Prostate gland (tissue), 2 donors: ENCODE measurements at regions of chr4 and their contacts with region 1.

Region 1: DNA sequence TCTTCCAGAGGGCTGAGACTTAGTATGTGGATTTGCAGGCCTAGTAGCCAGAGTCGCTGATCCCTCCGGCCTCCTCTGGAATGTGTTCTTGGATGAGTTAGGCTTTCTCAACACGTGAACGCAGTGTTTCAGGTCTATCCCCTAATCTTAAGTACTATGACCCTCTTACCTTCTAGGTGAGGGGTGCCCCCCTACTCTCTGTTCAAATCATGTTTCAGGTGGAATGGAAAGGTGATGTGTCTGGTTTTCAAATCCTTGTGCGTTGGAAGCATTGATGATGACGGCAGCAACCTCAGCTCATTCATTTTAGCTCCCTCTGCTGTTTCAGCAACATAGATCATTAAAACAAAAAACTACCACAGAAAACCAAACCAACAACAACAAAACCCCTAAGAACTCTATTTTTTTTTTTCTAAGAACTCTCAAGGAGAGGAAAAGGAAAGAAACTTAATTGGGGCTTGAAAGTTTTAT is 56.4 kb downstream of the RWDD4 start:
- DNase-seq: no peak
- H3K4me3 ChIP-seq: no peak overlapping the region
- H3K27ac ChIP-seq: no peak overlapping the region
- H3K4me1 ChIP-seq: no peaks in the 10 kb centered on the region
- H3K27me3 ChIP-seq: no peaks in the 10 kb centered on the region
- CTCF ChIP-seq: peak in 2 of 4 experiments; percentile 7 to 40
- POLR2A ChIP-seq: no peak

Region 2: GRCh38 chr4:183471946-183472708 is 130.5 kb before region 1 on chr4:
- intact Hi-C with region 1: loop called (anchors 10 kb)
- DNase-seq: peak; percentile 77
- H3K4me3 ChIP-seq: no peak overlapping the region
- H3K27ac ChIP-seq: no peak overlapping the region
- H3K4me1 ChIP-seq: no peaks in the 10 kb centered on the region
- H3K27me3 ChIP-seq: no peaks in the 10 kb centered on the region
- CTCF ChIP-seq: peak; percentile 72 to 94 (median 79)
- POLR2A ChIP-seq: no peak